CD8-positive, alpha-beta T cell (primary cell): ENCODE measurements at regions of chr1 and their contacts with region 1.

Region 1: GRCh38 chr1:204411451-204412204 is at the start of gene PPP1R15B:
- DNase-seq: peak; percentile 95 to 99 (median 97)
- ATAC-seq: peak; percentile 89
- H3K4me3 ChIP-seq: peak within 1 kb of the TSS; percentile 83 to 94
- H3K4me3 Mint-ChIP-seq: peak within 1 kb of the TSS; percentile 98
- H3K27ac ChIP-seq: peak within 1 kb of the TSS; percentile 95 to 99
- H3K27ac Mint-ChIP-seq: peak within 1 kb of the TSS; percentile 99
- H3K4me1 ChIP-seq: no peaks in the 10 kb centered on the region
- H3K4me1 Mint-ChIP-seq: peaks cover 11% of the 10 kb centered on the region
- H3K27me3 ChIP-seq: no peaks in the 10 kb centered on the region
- H3K27me3 Mint-ChIP-seq: no peaks in the 10 kb centered on the region
- CTCF ChIP-seq: no peak
- total RNA-seq, gene PPP1R15B: 144 to 146 TPM

Region 2: DNA sequence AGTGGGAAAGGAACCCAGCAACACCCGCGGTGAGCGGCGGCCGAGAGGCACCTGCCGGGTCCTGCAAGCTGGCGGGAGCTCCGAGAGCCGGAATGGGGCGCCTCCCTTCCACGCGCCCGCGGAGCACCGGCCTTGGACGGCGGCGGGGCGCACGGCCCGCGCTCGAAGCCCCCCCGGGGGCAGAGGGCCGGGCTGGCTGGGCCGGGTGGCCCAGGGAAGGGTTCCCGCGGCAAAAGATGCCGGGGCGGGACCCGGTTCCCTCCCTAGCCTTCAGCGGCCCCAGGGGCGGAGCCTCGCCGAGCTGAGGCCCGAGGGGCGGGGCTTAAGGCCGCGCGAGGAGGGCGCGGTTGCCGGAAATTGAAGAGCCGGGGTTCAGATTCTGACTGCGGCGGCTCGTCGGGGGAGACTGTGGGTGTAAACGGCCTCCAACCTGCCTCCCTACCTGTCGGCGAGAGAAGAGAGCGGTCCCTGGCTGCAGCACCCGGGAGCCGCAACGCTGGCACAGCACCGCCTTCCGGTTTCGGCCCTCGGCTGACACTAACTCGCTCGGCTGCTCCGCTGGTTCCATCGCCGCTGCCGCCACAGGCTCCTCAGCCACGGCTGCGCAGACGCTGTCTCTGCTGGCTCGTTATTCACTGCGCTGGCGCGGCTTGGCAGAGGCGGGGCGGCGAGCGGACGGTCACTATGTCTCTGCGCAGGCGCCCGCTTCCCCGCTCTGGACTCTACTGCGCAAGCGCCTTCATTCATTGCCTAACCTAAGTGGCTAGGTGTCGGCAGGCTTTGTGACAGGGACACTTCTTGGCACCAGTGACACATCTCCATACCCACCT is 1522.9 kb before region 1 on chr1 and contains the start of gene RABIF:
- CTCF ChIA-PET with region 1: no interaction called
- POLR2A ChIA-PET with region 1: no interaction called
- intact Hi-C with region 1: loop called in 1 of 2 experiments (anchors 5 kb)
- DNase-seq: peak; percentile 91 to 98 (median 96)
- ATAC-seq: peak; percentile 92
- H3K4me3 ChIP-seq: peak within 1 kb of the TSS; percentile 84 to 97
- H3K4me3 Mint-ChIP-seq: peak within 1 kb of the TSS; percentile 94
- H3K27ac ChIP-seq: peak within 1 kb of the TSS; percentile 92 to 94
- H3K27ac Mint-ChIP-seq: peak within 1 kb of the TSS; percentile 96
- H3K4me1 ChIP-seq: peaks cover 18% of the 10 kb centered on the region
- H3K4me1 Mint-ChIP-seq: peaks cover 30% of the 10 kb centered on the region
- H3K27me3 ChIP-seq: no peaks in the 10 kb centered on the region
- H3K27me3 Mint-ChIP-seq: no peaks in the 10 kb centered on the region
- CTCF ChIP-seq: no peak
- total RNA-seq, gene RABIF: 10.1 to 10.8 TPM

Region 3: DNA sequence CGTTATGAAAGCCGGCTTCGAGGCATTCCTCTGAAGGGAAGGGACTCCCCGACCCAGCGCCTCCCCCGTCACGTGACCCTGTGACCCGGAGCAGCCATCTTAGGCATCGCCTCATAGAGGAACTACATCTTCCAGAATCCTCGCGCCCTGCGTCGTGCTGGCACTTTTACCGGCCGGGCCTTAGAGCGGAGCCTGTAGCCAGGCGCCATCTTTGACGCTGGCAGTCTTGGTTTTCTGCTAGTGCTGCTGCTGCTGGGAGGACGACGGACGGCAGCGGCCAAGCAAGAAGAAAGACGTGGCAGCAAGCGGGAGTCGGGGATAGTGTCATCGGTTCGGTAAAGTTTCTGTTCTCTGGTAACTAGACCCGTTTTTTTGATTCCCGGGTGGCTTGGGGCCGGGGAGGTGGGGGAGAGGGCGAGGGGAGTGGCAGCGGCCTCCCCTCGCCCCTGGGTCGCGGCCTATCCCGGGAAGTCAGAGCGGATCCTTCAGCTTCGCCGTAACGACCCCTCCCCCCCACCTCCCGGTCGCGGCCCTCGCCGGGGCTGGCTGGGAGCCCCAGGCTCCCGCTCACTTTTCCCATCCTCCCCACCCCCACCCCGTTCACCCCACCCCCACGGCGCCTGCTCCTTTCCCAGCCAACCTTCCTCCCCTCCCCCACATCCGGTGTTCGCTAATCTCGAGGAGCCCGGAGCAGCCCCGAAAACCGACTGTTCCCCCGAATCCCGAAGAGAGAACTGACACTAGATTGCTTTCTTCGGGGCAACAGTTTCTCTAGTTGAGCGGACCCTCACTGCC is 616.0 kb before region 1 on chr1 and contains the starts of genes ZBED6 and ZC3H11A:
- CTCF ChIA-PET with region 1: no interaction called
- POLR2A ChIA-PET with region 1: no interaction called
- intact Hi-C with region 1: loop called (anchors 2 to 5 kb)
- DNase-seq: peak; percentile 96 to 100 (median 97)
- ATAC-seq: peak; percentile 96
- H3K4me3 ChIP-seq: peak within 1 kb of the TSS; percentile 67 to 73
- H3K4me3 Mint-ChIP-seq: peak within 1 kb of the TSS; percentile 96
- H3K27ac ChIP-seq: peak within 1 kb of the TSS; percentile 54 to 92
- H3K27ac Mint-ChIP-seq: peak within 1 kb of the TSS; percentile 97
- H3K4me1 ChIP-seq: peaks cover 42% of the 10 kb centered on the region
- H3K4me1 Mint-ChIP-seq: peaks cover 53% of the 10 kb centered on the region
- H3K27me3 ChIP-seq: no peaks in the 10 kb centered on the region
- H3K27me3 Mint-ChIP-seq: no peaks in the 10 kb centered on the region
- CTCF ChIP-seq: no peak
- total RNA-seq, gene ZBED6: 25.0 to 25.8 TPM
- total RNA-seq, gene ZC3H11A: 72.7 to 77.2 TPM

Region 4: GRCh38 chr1:204151552-204152309 is 259.9 kb before region 1 on chr1 and contains the start of gene ETNK2:
- CTCF ChIA-PET with region 1: no interaction called
- POLR2A ChIA-PET with region 1: no interaction called
- intact Hi-C with region 1: loop called in 1 of 2 experiments (anchors 1 kb)
- DNase-seq: peak; percentile 26 to 79 (median 59)
- ATAC-seq: peak; percentile 88
- H3K4me3 ChIP-seq: peak within 1 kb of the TSS; percentile 63 to 70
- H3K4me3 Mint-ChIP-seq: peak within 1 kb of the TSS; percentile 75
- H3K27ac ChIP-seq: peak within 1 kb of the TSS in 1 of 2 experiments; percentile 44
- H3K27ac Mint-ChIP-seq: peak within 1 kb of the TSS; percentile 77
- H3K4me1 ChIP-seq: peaks cover 13% of the 10 kb centered on the region
- H3K4me1 Mint-ChIP-seq: peaks cover 9% of the 10 kb centered on the region
- H3K27me3 ChIP-seq: no peaks in the 10 kb centered on the region
- H3K27me3 Mint-ChIP-seq: no peaks in the 10 kb centered on the region
- CTCF ChIP-seq: no peak
- total RNA-seq, gene ETNK2: 13.4 to 17.0 TPM

Region 5: DNA sequence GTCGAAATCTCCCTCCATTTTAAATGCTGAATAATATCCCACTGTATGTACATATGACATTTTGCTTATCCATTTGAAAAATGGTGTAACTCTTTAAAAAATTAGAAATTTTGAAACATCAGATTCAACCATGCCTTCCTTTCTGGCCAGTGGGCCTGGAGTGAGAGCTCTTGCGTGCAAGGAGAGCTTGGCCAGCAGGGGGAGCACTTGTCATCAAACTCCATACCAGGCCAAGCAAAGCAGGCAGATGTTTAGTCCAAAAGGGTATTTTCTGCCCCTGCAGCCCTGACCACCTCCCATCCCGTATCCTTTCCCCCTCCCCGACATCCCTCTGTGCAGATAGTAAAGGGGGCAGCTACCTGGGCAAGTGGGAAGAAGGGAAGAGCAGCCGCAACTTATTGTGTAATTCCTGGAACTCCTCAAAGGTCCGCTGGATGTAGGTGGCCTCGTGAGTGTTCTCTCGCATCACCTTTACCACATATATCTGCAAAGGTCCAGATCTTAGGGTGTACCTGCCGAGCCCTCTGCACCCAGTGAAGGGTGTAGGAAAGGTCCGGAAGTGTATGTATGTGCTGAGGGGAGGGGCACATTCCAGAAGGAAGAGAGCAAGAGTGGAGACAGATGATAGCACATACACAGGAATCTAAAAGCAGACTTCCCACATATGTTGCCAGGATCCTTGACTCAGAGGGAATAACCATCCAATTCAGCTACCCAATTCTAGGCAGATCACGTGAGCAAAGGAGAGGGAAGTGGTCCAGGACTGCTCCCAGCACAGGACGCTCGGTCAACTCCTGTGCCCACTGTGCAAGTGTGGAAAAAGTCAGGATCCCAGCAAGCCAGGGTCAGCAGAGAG is 19.9 kb after region 1 on chr1:
- CTCF ChIA-PET with region 1: interaction called, 18 read pairs
- POLR2A ChIA-PET with region 1: interaction called, 4 read pairs
- intact Hi-C with region 1: no loop called
- DNase-seq: peak; percentile 65 to 87 (median 80)
- ATAC-seq: peak; percentile 77
- H3K4me3 ChIP-seq: no peak overlapping the region
- H3K4me3 Mint-ChIP-seq: no peak overlapping the region
- H3K27ac ChIP-seq: no peak overlapping the region
- H3K27ac Mint-ChIP-seq: no peak overlapping the region
- H3K4me1 ChIP-seq: no peaks in the 10 kb centered on the region
- H3K4me1 Mint-ChIP-seq: no peaks in the 10 kb centered on the region
- H3K27me3 ChIP-seq: no peaks in the 10 kb centered on the region
- H3K27me3 Mint-ChIP-seq: no peaks in the 10 kb centered on the region
- CTCF ChIP-seq: peak; percentile 97

Region 6: GRCh38 chr1:204494281-204495077 is 82.9 kb after region 1 on chr1 and contains the start of gene PIK3C2B:
- CTCF ChIA-PET with region 1: no interaction called
- POLR2A ChIA-PET with region 1: interaction called, 3 read pairs
- intact Hi-C with region 1: loop called in 1 of 2 experiments (anchors 1 kb)
- DNase-seq: peak; percentile 29 to 86 (median 69)
- ATAC-seq: peak; percentile 69
- H3K4me3 ChIP-seq: peak within 1 kb of the TSS; percentile 64 to 86
- H3K4me3 Mint-ChIP-seq: peak within 1 kb of the TSS; percentile 94
- H3K27ac ChIP-seq: peak within 1 kb of the TSS; percentile 63 to 72
- H3K27ac Mint-ChIP-seq: peak within 1 kb of the TSS; percentile 96
- H3K4me1 ChIP-seq: peaks cover 29% of the 10 kb centered on the region
- H3K4me1 Mint-ChIP-seq: peaks cover 52% of the 10 kb centered on the region
- H3K27me3 ChIP-seq: no peaks in the 10 kb centered on the region
- H3K27me3 Mint-ChIP-seq: no peaks in the 10 kb centered on the region
- CTCF ChIP-seq: no peak
- total RNA-seq, gene PIK3C2B: 32.2 to 32.6 TPM

Region 7: GRCh38 chr1:204516180-204516879 is 104.7 kb after region 1 on chr1 and contains the start of gene MDM4:
- CTCF ChIA-PET with region 1: no interaction called
- POLR2A ChIA-PET with region 1: no interaction called
- intact Hi-C with region 1: loop called in 1 of 2 experiments (anchors 1 kb)
- DNase-seq: peak; percentile 85 to 97 (median 90)
- ATAC-seq: peak; percentile 76
- H3K4me3 ChIP-seq: peak within 1 kb of the TSS; percentile 63 to 88
- H3K4me3 Mint-ChIP-seq: no peak within 1 kb of the TSS
- H3K27ac ChIP-seq: peak within 1 kb of the TSS; percentile 89 to 97
- H3K27ac Mint-ChIP-seq: no peak within 1 kb of the TSS
- H3K4me1 ChIP-seq: peaks cover 77% of the 10 kb centered on the region
- H3K4me1 Mint-ChIP-seq: peaks cover 65% of the 10 kb centered on the region
- H3K27me3 ChIP-seq: no peaks in the 10 kb centered on the region
- H3K27me3 Mint-ChIP-seq: no peaks in the 10 kb centered on the region
- CTCF ChIP-seq: no peak
- total RNA-seq, gene MDM4: 209 to 218 TPM

Region 8: GRCh38 chr1:204806943-204807687 is 395.5 kb after region 1 on chr1:
- CTCF ChIA-PET with region 1: no interaction called
- POLR2A ChIA-PET with region 1: no interaction called
- intact Hi-C with region 1: no loop called
- DNase-seq: peak; percentile 69 to 90 (median 83)
- ATAC-seq: peak; percentile 96
- H3K4me3 ChIP-seq: peak overlapping the region; percentile 53 to 59
- H3K4me3 Mint-ChIP-seq: peak overlapping the region; percentile 88
- H3K27ac ChIP-seq: no peak overlapping the region
- H3K27ac Mint-ChIP-seq: no peak overlapping the region
- H3K4me1 ChIP-seq: peaks cover 12% of the 10 kb centered on the region
- H3K4me1 Mint-ChIP-seq: peaks cover 20% of the 10 kb centered on the region
- H3K27me3 ChIP-seq: no peaks in the 10 kb centered on the region
- H3K27me3 Mint-ChIP-seq: no peaks in the 10 kb centered on the region
- CTCF ChIP-seq: peak; percentile 100